RWPE1 (cell line): ENCODE measurements at regions of chr5 and their contacts with region 1.

Region 1: DNA sequence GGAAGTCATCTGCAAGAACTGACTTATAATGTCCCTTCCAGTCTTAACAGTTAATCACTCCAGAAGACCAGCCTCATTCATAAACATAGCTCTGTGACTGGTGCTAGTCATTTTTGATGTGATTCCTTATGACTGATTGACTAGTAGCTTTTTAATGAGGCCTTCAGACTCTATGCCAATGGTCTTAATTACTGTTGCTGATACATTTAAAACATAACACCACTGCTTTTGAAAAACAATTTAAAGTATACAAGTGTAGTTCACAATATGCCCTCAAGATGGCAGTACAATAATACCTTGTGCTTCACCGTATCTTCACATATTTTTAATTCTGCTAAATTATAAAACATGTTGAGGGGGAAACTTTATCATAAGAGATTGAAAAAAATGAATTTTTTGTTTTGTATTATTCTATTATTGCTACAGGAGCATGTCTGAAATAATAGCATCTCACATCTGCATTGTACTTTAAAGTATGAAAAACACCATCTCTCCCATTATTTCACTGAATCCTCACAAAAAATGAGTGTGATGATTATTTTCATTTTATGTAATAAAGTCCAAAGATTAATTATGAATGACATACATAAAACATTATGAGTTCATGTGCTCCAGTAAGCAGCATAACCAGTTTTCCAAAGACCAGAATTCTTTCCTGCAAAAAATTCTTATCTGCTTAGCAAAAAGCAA is 55.2 kb upstream of the SHISAL2B start:
- DNase-seq: peak; percentile 37
- H3K27ac ChIP-seq: no peak overlapping the region
- CTCF ChIP-seq: peak; percentile 90

Region 2: DNA sequence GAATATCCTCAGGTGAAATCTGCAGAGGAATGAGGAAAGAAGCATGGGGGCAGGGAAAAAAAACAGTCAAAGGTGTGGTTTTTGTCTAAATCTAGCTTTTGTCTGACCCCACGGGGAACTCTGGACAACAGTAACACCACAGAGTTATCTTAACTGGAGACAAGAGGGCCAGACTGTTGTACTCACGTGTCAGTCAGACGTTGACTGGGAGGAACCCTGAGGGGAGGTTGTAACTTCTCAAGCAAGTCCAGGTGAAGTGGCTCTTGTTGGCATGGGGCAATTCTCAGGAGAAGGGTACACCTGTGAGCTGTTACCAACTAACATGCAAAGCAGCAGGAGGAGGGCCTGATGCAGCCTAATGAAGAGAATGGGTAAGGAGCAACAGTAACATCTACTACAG is 11.0 kb after region 1 on chr5:
- CTCF ChIA-PET with region 1: interaction called, 10 read pairs
- POLR2A ChIA-PET with region 1: no interaction called
- DNase-seq: no peak
- H3K27ac ChIP-seq: no peak overlapping the region
- CTCF ChIP-seq: no peak

Region 3: DNA sequence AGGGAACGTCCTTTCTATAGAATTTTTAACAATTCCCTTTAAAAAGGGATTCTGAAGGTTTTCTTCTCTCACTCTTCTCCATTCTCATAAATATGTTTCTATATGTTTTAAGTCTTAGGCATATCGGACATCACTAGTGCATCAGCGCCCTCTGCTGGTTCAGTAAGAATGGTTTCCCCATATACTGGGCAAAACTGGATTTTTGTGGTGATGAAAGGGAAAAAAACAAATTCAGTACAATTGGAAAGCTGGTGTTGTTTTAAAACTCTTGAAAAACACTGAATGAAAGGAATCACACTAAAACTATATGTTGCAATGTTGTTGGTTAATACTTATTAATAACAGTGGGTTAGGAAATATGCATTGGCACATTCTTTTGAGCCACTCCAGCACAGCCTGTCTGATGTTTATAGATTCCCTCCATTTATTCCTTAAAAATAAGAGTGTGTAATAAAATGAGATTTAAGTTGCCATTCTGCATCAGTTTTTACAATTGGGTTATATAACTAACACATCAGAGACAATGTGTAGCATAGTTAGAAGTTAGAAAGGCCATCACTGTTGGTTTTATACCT is 149.4 kb after region 1 on chr5:
- CTCF ChIA-PET with region 1: interaction called, 18 read pairs
- POLR2A ChIA-PET with region 1: no interaction called
- DNase-seq: peak; percentile 52
- H3K27ac ChIP-seq: no peak overlapping the region
- CTCF ChIP-seq: peak; percentile 93